MCF 10A (cell line): ENCODE measurements at regions of chr20 and their contacts with region 1.

Region 1: GRCh38 chr20:35344354-35344837 is 52.2 kb upstream of the FAM83C start:
- DNase-seq: peak; percentile 85
- H3K4me3 Mint-ChIP-seq: peak overlapping the region; percentile 41
- H3K27ac Mint-ChIP-seq: peak overlapping the region; percentile 67
- H3K4me1 Mint-ChIP-seq: peaks cover 34% of the 10 kb centered on the region
- H3K27me3 Mint-ChIP-seq: no peaks in the 10 kb centered on the region
- CTCF ChIP-seq: no peak

Region 2: DNA sequence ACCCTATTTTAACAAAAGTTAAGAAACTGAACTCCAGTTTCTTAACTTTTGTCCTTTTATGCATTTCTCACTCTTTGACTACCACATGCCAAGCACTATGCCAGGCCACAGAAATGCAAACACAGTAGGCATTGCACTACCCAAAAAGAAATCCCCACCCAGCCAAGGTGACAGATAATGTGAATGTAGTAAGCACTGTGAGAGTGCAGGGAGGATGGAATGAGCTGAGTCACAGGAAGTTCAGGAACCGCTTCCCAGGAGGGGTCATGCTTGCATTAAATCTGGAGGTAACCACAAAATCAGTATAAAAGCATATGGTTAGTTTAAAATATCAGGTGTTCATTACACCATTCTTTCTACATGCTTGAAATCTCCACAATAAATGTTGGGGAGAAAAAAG is 32.0 kb before region 1 on chr20:
- CTCF ChIA-PET with region 1: interaction called, 8 read pairs
- POLR2A ChIA-PET with region 1: interaction called, 48 read pairs
- intact Hi-C with region 1: no loop called
- DNase-seq: peak; percentile 96
- H3K4me3 Mint-ChIP-seq: peak overlapping the region; percentile 4
- H3K27ac Mint-ChIP-seq: peak overlapping the region; percentile 74
- H3K4me1 Mint-ChIP-seq: peaks cover 55% of the 10 kb centered on the region
- H3K27me3 Mint-ChIP-seq: no peaks in the 10 kb centered on the region
- CTCF ChIP-seq: no peak

Region 3: GRCh38 chr20:35329435-35330139 is 14.8 kb before region 1 on chr20:
- CTCF ChIA-PET with region 1: interaction called, 12 read pairs
- POLR2A ChIA-PET with region 1: interaction called, 9 read pairs
- intact Hi-C with region 1: no loop called
- DNase-seq: peak; percentile 82
- H3K4me3 Mint-ChIP-seq: no peak overlapping the region
- H3K27ac Mint-ChIP-seq: peak overlapping the region; percentile 58
- H3K4me1 Mint-ChIP-seq: peaks cover 34% of the 10 kb centered on the region
- H3K27me3 Mint-ChIP-seq: no peaks in the 10 kb centered on the region
- CTCF ChIP-seq: peak; percentile 56

Region 4: DNA sequence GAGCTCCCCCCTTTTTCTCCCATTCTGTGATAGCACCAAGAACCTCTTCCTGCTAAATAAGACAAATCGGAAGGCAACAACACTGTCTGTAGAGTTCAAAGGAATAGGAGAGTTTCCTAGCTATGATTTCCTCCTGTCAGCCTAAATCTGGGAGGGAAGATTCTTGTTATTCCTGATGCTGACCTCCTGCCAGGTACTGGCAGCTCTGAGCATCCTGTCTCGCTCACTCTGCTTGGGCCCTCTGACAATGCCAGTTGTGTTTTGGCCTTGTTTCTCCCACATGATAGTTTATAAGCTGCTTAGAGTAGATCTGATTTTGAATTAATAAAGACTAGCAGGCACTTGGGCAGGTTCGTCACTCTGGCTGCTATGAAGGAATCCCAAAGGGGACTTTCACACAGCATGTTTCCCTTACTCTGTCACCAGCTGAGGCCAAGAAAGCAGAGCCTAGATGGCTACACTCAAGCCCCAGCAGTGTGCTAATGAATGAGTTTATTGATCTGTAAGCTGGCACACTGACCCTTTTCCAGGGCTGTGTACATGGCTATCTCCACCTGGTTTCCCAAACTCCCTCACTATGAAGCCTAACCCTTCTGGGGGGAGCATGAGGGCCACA is 15.0 kb after region 1 on chr20:
- CTCF ChIA-PET with region 1: interaction called, 6 read pairs
- POLR2A ChIA-PET with region 1: interaction called, 25 read pairs
- intact Hi-C with region 1: no loop called
- DNase-seq: no peak
- H3K4me3 Mint-ChIP-seq: no peak overlapping the region
- H3K27ac Mint-ChIP-seq: no peak overlapping the region
- H3K4me1 Mint-ChIP-seq: peaks cover 19% of the 10 kb centered on the region
- H3K27me3 Mint-ChIP-seq: no peaks in the 10 kb centered on the region
- CTCF ChIP-seq: no peak